Activated B cell treated with CpG ODN at 0.5 μM for 24 hours (primary cell): ENCODE measurements at regions of chr2 and their contacts with region 1.

Region 1: GRCh38 chr2:55050133-55050994 is at the start of gene RTN4:
- DNase-seq: peak; percentile 98
- ATAC-seq: peak; percentile 86
- H3K4me3 Mint-ChIP-seq: peak within 1 kb of the TSS; percentile 96
- H3K27ac Mint-ChIP-seq: peak within 1 kb of the TSS; percentile 99
- H3K4me1 Mint-ChIP-seq: peaks cover 70% of the 10 kb centered on the region
- H3K27me3 Mint-ChIP-seq: no peaks in the 10 kb centered on the region
- CTCF ChIP-seq: no peak
- total RNA-seq, gene RTN4: 60.5 and 60.6 TPM in 2 replicates

Region 2: DNA sequence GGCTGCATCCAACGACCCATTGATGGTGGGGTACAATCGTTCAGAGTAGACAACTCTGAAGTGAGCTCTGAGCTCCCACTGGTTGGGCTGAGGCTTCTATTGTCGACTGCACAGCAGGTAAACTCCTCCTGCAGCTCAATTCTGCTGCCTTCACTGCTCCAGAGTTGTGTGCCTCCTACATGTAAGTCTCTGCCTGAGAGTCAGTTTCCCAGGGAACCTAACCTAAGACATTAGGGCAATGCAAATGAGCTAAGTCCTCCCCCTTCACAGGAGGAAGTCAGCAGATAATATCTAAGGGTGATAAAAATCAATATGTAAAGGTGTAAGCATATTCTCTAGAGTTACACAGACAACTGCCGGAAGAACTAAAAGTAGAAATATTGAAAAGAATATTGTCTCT is 957.4 kb before region 1 on chr2:
- CTCF ChIA-PET with region 1: no interaction called
- POLR2A ChIA-PET with region 1: no interaction called
- intact Hi-C with region 1: loop called (anchors 1 kb)
- DNase-seq: no peak
- ATAC-seq: peak; percentile 68
- H3K4me3 Mint-ChIP-seq: peak overlapping the region; percentile 49
- H3K27ac Mint-ChIP-seq: peak overlapping the region; percentile 82
- H3K4me1 Mint-ChIP-seq: peaks cover 52% of the 10 kb centered on the region
- H3K27me3 Mint-ChIP-seq: no peaks in the 10 kb centered on the region
- CTCF ChIP-seq: no peak

Region 3: DNA sequence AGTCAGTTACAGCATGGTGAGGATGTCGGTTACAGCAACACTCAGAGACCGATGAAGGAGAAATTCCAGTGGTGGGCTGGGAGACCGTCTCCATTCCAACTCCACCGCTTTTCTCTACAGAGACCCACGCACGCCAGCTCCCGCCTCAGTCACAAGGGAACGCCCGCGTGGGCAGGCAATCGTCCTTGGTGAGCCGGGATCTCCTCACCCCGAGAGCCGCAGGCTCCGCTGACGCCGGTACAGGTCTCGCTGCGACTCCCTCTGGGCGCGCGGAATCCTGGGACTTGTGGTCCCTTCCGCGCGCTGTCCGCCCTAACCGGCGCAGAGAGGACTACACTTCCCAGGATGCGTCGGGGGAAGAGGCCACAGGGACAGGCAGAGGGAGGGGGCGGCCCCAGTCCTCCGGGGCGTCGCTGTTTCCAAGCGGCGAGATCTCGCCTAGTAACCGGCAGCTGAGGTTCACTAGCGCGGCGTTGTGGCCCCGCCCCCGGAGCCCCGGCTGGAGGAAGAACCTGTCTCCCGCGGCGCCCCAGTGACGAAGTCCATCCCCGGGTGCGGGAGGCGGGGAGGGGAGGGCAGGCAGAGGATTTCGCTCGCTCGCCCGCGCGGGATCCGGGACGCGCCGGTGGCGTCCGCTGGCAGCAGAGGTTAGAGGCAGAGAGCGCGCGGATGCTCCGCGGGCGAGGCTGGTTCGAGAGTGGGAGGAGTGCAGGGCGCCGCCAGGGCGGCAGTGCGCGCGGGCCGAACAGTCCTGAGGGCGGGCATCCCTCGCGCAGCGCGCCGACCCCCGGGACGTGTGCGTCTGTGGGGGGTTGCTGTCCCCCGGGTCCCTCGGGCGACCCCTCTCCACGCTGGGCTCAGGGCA is 327.0 kb before region 1 on chr2 and contains the start of gene EML6:
- CTCF ChIA-PET with region 1: no interaction called
- POLR2A ChIA-PET with region 1: interaction called, 11 read pairs
- intact Hi-C with region 1: loop called (anchors 1 kb)
- DNase-seq: peak; percentile 97
- ATAC-seq: peak; percentile 95
- H3K4me3 Mint-ChIP-seq: peak within 1 kb of the TSS; percentile 95
- H3K27ac Mint-ChIP-seq: peak within 1 kb of the TSS; percentile 74
- H3K4me1 Mint-ChIP-seq: peaks cover 26% of the 10 kb centered on the region
- H3K27me3 Mint-ChIP-seq: peaks cover 9% of the 10 kb centered on the region
- CTCF ChIP-seq: no peak
- total RNA-seq, gene EML6: 25.3 and 31.5 TPM in 2 replicates

Region 4: GRCh38 chr2:55033066-55033742 is 17.2 kb before region 1 on chr2:
- CTCF ChIA-PET with region 1: no interaction called
- POLR2A ChIA-PET with region 1: interaction called, 7 read pairs
- intact Hi-C with region 1: loop called (anchors 1 kb)
- DNase-seq: no peak
- ATAC-seq: peak; percentile 86
- H3K4me3 Mint-ChIP-seq: no peak overlapping the region
- H3K27ac Mint-ChIP-seq: no peak overlapping the region
- H3K4me1 Mint-ChIP-seq: peaks cover 57% of the 10 kb centered on the region
- H3K27me3 Mint-ChIP-seq: no peaks in the 10 kb centered on the region
- CTCF ChIP-seq: no peak

Region 5: GRCh38 chr2:55223958-55224760 is 173.8 kb after region 1 on chr2:
- CTCF ChIA-PET with region 1: interaction called, 3 read pairs
- POLR2A ChIA-PET with region 1: interaction called, 18 read pairs
- intact Hi-C with region 1: loop called (anchors 1 kb)
- DNase-seq: no peak
- ATAC-seq: no peak
- H3K4me3 Mint-ChIP-seq: peak overlapping the region; percentile 81
- H3K27ac Mint-ChIP-seq: peak overlapping the region; percentile 87
- H3K4me1 Mint-ChIP-seq: peaks cover 28% of the 10 kb centered on the region
- H3K27me3 Mint-ChIP-seq: no peaks in the 10 kb centered on the region
- CTCF ChIP-seq: no peak

Region 6: GRCh38 chr2:55519938-55520885 is 469.8 kb after region 1 on chr2:
- CTCF ChIA-PET with region 1: no interaction called
- POLR2A ChIA-PET with region 1: interaction called, 6 read pairs
- intact Hi-C with region 1: loop called (anchors 2 kb)
- DNase-seq: peak; percentile 17
- ATAC-seq: peak; percentile 10
- H3K4me3 Mint-ChIP-seq: peak overlapping the region; percentile 98
- H3K27ac Mint-ChIP-seq: peak overlapping the region; percentile 96
- H3K4me1 Mint-ChIP-seq: peaks cover 16% of the 10 kb centered on the region
- H3K27me3 Mint-ChIP-seq: no peaks in the 10 kb centered on the region
- CTCF ChIP-seq: no peak